ENCODE measurements at regions of chr19 and their contacts with region 1.

Region 1: GRCh38 chr19:18058208-18059030 is 28.3 kb downstream of the IL12RB1 start:
- DNase-seq: peak; percentile 26
- ATAC-seq: peak; percentile 86
- H3K4me3 ChIP-seq: peak overlapping the region; percentile 29 to 45
- H3K27ac ChIP-seq: peak overlapping the region; percentile 54
- H3K4me1 ChIP-seq: peaks cover 6 to 32% of the 10 kb centered on the region in 2 experiments; a peak in 3 of 4 replicates
- H3K27me3 ChIP-seq: no peaks in the 10 kb centered on the region
- CTCF ChIP-seq: peak; percentile 85 to 96 (median 93)
- POLR2A ChIP-seq: no peak
- RAD21 ChIP-seq: peak; percentile 98

Region 2: DNA sequence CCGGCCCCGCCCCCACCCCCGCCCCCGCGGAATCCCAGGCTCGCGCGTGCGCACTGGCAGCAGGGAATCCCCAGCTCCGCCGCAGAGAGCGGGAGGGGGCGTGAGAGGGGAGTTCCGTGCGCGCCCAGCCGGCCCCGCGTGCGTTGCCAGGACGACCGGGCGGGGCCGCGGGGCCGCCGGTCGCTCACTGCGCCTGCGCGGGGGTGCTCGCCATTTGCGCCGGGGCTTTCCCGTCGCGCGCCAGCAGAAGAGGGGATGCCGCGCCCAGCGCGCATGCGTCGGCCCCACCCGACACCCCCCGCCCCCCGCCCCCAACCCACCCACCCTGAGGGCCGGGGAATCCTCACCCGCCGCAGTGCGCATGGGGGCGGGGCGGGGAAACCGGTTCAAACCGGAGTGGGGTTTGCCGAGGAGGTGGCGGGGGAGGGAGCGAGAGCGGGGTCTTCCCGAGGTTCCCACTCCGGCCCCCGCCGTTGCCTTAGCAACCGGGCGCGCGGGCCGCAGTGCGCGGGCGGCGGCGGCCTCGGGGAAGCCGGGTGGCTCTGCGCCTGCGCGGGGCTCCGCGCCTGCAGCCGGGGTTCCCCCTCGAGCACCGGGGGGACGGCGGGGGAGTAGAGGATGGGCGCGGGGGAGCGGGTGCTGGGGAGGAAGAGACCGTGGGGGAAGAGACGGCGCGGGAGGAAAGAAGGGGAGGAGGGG is 110.5 kb before region 1 on chr19:
- CTCF ChIA-PET with region 1: no interaction called
- POLR2A ChIA-PET with region 1: interaction called, 4 read pairs
- RAD21 ChIA-PET with region 1: interaction called in 1 of 2 experiments, 4 read pairs
- intact Hi-C with region 1: loop called (anchors 5 kb)
- DNase-seq: peak; percentile 81
- ATAC-seq: peak; percentile 66
- H3K4me3 ChIP-seq: peak overlapping the region; percentile 44 to 62
- H3K27ac ChIP-seq: peak overlapping the region; percentile 47; the same call in 1 of the 2 replicates
- H3K4me1 ChIP-seq: peaks cover 34 to 67% of the 10 kb centered on the region in 2 experiments
- H3K27me3 ChIP-seq: no peaks in the 10 kb centered on the region
- CTCF ChIP-seq: no peak
- POLR2A ChIP-seq: no peak
- RAD21 ChIP-seq: no peak

Region 3: DNA sequence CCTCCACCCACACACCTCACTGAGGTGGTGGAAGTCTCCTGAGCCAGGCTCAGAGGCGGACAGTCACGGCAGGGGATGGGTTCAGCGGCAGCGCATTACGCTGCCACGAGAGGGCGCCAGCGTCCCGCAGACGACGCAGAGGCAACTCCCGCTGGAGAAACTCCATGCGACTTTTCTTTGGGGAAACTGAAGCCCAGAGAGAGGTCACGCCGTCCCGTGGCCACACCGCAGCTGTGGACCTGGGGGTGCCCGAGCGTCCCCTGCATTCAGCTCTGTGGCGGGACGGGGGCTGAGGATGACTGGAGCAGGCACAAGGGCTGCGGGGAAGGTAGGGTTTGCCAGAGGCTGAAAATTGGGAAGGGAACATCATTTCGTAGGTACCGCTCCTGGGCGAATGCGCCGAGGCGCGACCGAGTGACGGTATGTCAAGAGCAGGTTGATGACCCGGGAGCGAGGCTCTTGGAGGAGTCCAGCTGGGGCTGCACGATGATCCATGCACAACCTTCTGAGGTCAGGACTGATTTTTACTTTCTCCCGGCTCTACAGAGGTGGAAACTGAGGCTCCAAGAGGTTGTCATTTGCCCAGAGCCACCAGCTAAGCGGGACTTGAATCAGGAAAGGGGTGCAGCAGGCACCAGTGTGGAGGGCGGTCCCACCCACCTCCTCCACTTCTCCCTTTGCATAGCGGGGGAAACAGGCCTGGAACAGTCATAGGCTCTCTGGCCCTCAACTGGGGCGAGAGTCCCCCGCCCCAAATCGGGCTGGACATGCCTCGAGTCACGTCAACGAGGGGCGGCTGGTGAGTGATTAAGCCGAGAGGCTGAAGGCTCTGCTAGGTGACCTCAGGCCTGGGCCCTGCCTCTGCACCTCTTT is 51.1 kb before region 1 on chr19:
- CTCF ChIA-PET with region 1: interaction called, 3 read pairs
- POLR2A ChIA-PET with region 1: no interaction called
- RAD21 ChIA-PET with region 1: no interaction called
- intact Hi-C with region 1: loop called (anchors 1 kb)
- DNase-seq: no peak
- ATAC-seq: peak; percentile 95
- H3K4me3 ChIP-seq: no peak overlapping the region
- H3K27ac ChIP-seq: peak overlapping the region; percentile 53; the same call in 1 of the 2 replicates
- H3K4me1 ChIP-seq: peaks cover 2 to 17% of the 10 kb centered on the region in 2 experiments; a peak in 3 of 4 replicates
- H3K27me3 ChIP-seq: no peaks in the 10 kb centered on the region
- CTCF ChIP-seq: peak; percentile 86 to 97 (median 95)
- POLR2A ChIP-seq: no peak
- RAD21 ChIP-seq: peak; percentile 97